AG04449 (cell line): ENCODE measurements at regions of chr15 and their contacts with region 1.

Region 1: GRCh38 chr15:61834076-61834697 is 226.1 kb downstream of the VPS13C start:
- DNase-seq: peak; percentile 23
- H3K4me3 ChIP-seq: no peak overlapping the region
- CTCF ChIP-seq: peak; percentile 91

Region 2: DNA sequence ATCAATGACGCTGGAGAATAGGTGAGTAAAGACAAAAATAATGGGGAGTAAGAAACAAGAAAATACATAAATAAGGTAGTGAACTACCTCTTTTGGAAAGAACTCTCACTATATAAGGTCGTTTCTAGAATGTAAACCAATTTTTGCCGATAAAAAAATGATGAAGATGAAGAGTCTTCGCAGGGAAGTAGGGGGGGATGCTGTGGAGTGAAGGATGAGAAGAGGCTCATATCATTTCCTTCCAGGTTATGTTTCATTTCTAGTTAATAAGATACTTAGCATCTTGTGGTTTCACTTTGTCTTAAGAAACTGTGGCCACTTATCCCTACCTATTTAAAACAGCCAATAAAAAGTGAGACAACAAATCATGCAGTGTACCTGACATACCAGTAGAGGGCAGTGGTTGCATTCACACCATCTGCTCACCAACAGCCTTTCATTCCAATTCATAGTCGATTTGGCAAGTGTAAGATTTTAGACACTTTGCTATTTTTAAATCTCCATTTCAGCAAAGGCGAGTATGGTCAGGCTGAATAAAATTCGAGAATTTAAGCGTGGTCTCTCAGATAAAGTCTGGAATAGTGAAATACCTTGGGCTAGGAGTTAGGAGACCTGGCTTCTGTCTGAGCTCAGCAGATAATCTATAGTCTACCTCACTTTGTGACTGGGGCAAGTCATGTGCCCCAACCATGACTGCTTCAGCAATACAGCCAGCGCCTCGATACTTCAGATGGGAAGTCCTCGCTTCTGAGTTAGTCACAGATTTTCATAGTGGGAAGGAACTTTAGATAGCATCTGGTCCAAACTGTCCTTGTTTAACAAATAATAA is 1326.4 kb before region 1 on chr15:
- CTCF ChIA-PET with region 1: interaction called, 31 read pairs
- POLR2A ChIA-PET with region 1: no interaction called
- DNase-seq: peak; percentile 24
- H3K4me3 ChIP-seq: no peak overlapping the region
- CTCF ChIP-seq: peak; percentile 78

Region 3: DNA sequence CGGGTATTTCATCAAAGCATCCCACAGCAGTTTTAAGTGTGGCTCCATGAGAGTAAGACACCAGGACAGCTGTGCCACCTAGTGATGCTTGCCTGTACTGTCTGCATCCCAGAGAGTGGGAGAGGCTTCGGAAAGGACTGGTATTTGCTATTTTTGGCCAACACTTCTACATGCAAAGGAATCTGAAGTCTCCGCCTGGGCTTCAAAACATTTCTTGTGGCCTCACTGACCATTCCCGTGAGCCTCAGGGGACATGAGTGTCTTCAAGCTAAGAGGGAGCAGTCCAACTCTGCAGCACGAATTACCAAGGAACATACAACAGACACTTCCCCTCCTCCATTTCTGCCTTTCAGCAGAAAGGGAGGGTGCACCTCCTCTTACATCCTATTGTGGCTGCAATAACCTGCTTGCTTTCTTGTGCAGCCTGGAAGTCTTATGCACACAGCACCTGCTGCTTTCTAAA is 782.6 kb before region 1 on chr15:
- CTCF ChIA-PET with region 1: interaction called, 23 read pairs
- POLR2A ChIA-PET with region 1: no interaction called
- DNase-seq: peak; percentile 67
- H3K4me3 ChIP-seq: no peak overlapping the region
- CTCF ChIP-seq: peak; percentile 81

Region 4: DNA sequence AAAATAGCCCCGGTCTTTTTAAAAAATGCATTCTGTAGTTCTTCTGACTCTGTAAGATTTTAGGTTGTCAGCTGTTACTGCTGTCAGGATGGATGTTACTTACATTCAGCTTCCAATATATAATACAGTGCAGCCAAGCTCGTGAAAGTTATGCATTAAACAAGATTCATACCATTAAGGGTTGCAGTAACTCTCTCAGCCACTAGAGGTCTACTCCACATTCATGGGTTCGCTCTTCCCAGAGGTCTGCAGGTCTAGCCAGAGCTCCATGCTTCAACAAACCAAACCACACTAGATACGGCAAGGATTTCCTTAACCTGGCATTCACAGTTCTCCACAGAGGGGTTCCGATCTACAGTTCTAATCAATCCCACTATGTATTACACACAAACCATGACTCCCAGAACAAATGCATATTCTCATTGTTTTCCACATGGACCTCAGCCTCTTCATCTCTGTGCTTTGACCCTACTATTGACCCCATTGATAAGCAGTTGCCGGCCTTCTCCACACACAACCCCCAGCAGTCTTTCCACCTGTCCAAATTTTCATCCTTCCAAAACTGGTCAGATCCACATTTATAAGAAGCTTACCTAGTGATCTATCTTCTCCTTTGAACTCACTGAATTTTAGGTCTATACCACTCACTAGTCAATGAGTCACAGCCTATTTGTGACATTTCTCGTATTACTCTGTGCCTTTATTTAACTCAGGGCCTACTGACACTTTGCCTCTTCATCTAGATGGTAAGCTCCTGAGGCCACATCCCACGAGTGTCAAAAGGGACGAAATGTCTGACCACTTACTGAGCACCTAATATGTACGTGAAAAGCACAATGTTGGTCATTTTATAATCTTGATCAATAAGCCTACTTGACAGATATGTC is 638.8 kb before region 1 on chr15:
- CTCF ChIA-PET with region 1: interaction called, 23 read pairs
- POLR2A ChIA-PET with region 1: no interaction called
- DNase-seq: no peak
- H3K4me3 ChIP-seq: no peak overlapping the region
- CTCF ChIP-seq: peak; percentile 75

Region 5: DNA sequence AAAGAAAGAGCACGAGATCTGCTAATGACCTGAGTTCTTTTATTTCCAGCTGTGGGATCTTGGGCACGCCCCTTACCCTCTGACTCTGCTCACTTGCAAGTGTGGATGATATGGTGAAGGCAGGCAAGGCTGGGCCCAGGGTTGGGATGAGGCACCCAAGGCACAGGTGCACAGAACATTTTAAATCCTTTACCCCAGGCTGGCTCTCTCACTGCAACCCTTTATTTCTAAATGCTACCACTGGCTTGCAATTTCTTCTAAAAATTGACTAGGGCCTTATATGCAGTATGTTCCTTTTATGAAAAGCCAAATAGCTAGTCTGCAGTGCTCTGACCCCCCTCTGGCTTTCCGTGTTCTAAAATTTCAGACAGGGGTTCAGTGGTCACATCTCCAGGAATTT is 11.7 kb before region 1 on chr15:
- CTCF ChIA-PET with region 1: interaction called, 14 read pairs
- POLR2A ChIA-PET with region 1: no interaction called
- DNase-seq: no peak
- H3K4me3 ChIP-seq: no peak overlapping the region
- CTCF ChIP-seq: no peak

Region 6: GRCh38 chr15:62324382-62324781 is 490.2 kb after region 1 on chr15:
- CTCF ChIA-PET with region 1: no interaction called
- POLR2A ChIA-PET with region 1: no interaction called
- DNase-seq: peak; percentile 26
- H3K4me3 ChIP-seq: no peak overlapping the region
- CTCF ChIP-seq: no peak